ENCODE measurements at regions of chr11 and their contacts with region 1.

Region 1: GRCh38 chr11:10208131-10208575 is 85.9 kb downstream of the SBF2 start:
- DNase-seq: no peak
- H3K4me3 ChIP-seq: no peak overlapping the region
- CTCF ChIP-seq: peak; percentile 49

Region 2: DNA sequence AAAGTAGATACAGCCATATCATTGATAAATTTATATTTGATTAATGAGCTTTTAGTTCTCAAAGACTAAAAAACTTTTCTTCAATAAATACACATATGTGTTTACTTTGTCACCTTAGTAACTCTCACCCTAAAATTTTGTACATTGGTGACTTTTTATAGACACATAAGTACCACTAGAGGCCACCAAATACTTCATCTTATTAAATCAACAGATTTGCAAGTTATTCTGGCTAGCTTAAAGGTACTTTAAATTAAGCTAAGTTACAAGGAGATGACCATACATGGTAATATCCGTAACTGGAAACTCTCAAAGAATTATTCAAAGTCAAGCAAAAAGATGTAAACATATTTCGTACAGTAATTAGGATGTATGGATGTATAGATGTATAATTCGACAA is 26.3 kb before region 1 on chr11:
- CTCF ChIA-PET with region 1: interaction called, 31 read pairs
- POLR2A ChIA-PET with region 1: no interaction called
- DNase-seq: no peak
- H3K4me3 ChIP-seq: no peak overlapping the region
- CTCF ChIP-seq: no peak

Region 3: DNA sequence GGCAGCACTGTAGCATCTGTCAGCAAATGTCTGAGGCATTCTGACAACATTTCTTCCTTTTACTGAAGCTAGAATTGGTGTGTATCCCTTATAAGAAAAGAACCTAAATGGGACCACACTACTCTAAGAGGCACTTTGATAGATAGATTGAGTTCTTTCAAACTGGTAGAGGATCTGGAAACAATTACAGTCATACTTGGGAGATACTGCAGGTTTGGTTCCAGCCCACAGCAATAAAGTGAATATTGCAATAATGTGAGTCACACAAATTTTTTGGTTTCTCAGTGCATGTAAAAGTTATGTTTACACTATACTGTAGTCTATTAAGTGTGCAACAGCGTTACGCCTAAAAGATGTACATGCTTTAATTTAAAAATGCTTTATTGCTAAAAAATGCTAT is 11.1 kb before region 1 on chr11:
- CTCF ChIA-PET with region 1: interaction called, 75 read pairs
- POLR2A ChIA-PET with region 1: no interaction called
- DNase-seq: peak; percentile 38
- H3K4me3 ChIP-seq: no peak overlapping the region
- CTCF ChIP-seq: no peak

Region 4: GRCh38 chr11:10233581-10233980 is 25.4 kb after region 1 on chr11:
- CTCF ChIA-PET with region 1: interaction called, 35 read pairs
- POLR2A ChIA-PET with region 1: no interaction called
- DNase-seq: peak; percentile 70
- H3K4me3 ChIP-seq: no peak overlapping the region
- CTCF ChIP-seq: no peak

Region 5: DNA sequence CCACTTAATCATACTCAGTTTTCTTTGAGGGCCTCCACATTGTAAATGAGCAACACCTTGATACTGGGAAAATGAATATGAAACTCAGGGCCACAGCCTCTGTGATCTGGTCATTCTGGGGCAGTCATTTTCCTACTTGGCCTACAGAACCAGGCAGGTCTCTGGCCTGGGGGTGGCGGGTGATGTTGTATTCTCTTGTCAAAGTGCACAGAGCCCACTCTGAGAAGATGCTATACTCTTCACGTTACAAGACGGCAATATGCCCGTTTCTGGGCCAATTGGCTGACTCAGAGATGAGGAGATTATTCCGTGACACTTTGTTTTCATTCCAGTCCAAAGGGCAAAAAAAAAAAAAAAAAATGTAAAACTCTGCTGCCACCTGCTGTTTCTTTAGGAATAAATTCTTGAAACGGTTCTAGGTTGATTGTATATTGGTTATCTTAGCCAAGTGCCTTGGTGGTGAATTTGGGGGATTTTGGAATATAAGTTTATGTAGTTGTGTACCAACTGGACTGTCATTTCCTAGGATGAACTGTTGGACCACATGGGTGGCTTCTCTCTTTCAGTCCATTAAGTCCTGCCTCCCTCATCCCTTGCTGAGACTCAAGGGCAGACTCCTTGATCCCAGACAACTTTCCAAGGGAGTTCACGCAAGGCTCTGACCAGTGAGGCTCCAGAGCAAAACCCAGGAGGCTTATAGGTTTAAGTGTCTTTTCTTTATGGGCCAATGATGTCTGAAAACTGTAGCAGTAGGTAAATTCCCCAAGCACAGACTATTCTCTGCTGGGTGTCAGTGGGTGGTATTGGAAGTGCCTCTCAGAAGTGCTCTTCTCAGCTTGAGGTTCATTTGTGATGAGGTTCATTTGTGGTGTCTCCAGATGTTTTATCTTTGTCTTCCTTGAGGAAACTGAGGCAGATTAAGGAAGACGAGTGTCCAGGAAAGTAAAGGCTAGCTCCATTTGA is 115.0 kb after region 1 on chr11:
- CTCF ChIA-PET with region 1: interaction called, 12 read pairs
- POLR2A ChIA-PET with region 1: no interaction called
- DNase-seq: peak; percentile 67
- H3K4me3 ChIP-seq: no peak overlapping the region
- CTCF ChIP-seq: no peak

Region 6: DNA sequence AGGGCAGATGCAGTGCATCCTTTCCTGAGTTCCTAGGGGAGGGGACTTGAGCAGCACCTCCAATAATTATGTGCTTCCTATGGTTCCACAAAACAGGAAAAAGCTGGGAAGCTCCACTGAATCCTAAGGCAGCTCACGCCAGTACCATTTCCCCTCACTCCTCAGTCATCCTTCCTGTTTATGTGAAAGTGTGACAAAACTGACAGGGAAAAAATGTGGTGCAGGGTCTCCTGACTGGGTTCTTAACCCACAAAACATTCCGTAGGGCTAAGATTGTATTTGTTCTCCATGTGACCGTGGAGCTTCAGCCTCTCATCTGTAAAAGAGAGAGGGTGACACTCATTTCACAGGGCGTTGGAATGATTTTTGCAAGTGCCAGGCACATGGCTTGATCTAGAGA is 372.5 kb after region 1 on chr11:
- CTCF ChIA-PET with region 1: no interaction called
- POLR2A ChIA-PET with region 1: no interaction called
- DNase-seq: no peak
- H3K4me3 ChIP-seq: no peak overlapping the region
- CTCF ChIP-seq: no peak

Measured in AG04449 (cell line).